Aorta (tissue), 5 donors: ENCODE measurements at regions of chr1 and their contacts with region 1.

Region 1: DNA sequence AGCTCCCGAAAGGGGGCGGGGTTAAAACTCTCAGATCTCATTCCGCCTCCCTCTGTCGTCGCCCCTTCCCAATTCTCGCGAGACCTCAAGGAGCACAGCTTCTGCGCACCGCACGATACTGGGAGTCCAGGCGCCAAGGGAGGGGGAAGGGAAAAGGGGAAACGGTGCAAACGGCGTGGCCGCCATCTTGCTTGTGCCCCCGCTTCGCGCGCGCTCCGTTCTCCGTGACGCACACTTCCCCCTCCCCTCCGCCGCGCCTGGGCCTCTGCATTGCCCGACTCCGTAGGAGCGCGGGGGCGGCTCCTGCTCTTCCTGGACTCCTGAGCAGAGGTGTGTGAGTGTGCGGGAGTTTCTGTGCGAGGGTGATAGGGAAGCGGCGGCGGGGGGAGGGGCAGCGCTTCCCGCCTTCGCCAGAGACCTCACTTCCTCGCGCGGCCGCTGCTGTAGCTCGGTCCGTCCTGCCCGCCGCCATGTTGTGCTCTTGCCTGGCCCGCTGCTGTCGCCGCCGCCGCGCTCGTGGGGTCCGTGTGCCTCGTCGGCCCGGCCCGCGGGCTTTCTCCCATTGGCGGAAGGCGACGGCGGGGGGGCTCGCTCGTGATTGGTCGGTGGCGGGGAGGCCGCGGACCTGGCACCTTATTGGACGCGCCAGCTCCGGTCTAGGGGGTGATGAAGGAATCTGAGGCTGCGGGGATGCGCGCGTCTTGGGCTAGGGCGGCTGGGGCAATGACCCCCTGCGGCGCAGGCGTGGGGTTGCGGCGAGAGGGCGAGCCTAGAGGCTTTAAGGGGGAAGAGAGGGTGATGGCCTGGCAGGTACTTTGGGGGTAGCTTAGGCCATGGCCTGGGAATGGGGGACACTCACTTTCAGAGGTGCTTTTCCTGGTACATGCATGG is at the start of gene NFYC:
- DNase-seq: peak; percentile 99
- ATAC-seq: peak; percentile 98
- H3K4me3 ChIP-seq: peak within 1 kb of the TSS; percentile 58 to 77
- H3K27ac ChIP-seq: peak within 1 kb of the TSS; percentile 89 to 95
- H3K4me1 ChIP-seq: peaks cover 0 to 5% of the 10 kb centered on the region in 2 donors
- H3K27me3 ChIP-seq: no peaks in the 10 kb centered on the region
- total RNA-seq, gene NFYC: 39.1 to 56.4 TPM

Region 2: DNA sequence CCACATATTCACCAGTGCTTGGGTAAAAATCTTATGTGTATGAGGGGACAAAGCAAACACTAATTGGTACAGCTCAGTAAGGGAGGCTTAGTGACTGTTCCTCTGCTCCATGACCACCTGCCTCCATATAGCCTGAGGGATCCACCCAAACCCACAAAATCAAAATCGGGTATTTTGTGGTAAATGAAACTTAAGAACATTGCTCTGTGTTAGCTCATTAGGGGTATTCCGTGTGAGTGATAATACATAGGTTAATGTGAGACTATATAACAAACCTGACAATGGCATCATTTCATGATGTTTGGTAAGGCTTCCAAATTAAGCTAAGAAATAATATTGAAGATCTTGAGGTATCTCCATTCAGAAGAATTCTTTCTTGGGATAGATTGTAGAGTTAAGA is 400.5 kb before region 1 on chr1:
- intact Hi-C with region 1: no loop called
- DNase-seq: no peak
- ATAC-seq: no peak
- H3K4me3 ChIP-seq: no peak overlapping the region
- H3K27ac ChIP-seq: no peak overlapping the region
- H3K4me1 ChIP-seq: peaks cover 0 to 1% of the 10 kb centered on the region in 2 donors
- H3K27me3 ChIP-seq: no peaks in the 10 kb centered on the region

Region 3: DNA sequence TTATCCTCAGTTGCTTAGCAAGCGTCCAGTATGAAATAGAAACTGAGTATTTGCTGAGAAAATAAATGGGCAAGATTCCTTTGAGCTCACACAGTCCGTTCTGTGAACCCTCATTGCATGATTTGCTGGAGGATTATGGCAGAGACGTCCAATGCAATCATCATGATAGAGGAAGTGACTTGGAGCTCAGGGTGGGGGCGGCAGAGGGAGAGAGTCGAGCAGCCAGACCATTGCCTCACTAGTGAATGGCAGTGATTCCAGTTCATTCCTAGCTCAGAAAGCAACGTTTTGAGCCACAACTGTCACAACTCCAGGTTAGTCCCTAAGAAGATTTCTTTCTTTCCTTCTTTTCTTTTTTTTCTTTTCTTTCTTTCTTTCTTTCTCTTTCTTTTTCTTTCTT is 347.2 kb before region 1 on chr1:
- intact Hi-C with region 1: no loop called
- DNase-seq: peak in 1 of 2 donors; percentile 82
- ATAC-seq: peak; percentile 57
- H3K4me3 ChIP-seq: no peak overlapping the region
- H3K27ac ChIP-seq: no peak overlapping the region
- H3K4me1 ChIP-seq: no peaks in the 10 kb centered on the region
- H3K27me3 ChIP-seq: no peaks in the 10 kb centered on the region

Region 4: DNA sequence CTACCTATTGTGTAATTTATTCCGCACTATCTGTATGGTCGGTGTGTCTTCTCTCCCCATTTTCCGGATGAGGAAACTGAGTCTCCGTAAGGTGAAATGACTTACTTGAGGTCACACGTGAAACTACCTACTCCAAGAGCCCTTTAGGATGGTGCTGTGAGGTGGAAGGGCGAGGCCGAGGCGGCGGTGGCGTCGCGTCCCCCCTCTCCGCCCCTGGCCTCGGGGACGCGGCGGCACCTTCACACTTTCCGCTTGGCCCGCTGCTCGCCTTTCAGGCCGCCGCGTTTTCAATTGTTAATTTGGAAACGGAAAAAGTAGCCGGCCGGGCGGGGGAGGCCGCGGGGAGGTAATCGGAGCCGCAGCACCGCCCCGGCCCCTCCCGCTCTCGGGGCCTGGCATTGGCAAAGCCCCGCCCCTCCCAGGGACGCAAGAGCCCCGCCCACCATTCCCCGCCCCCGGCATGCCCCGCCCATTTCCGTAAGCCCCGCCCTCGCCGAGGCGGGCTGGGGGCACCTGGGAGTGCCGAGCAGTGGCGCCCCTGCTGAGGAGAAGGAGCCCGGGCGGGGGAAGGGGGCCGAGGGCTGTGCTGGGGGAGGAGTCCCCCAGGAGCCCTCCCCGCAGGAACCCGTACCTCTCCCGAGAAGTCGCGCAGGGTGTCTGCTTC is 110.4 kb after region 1 on chr1:
- intact Hi-C with region 1: loop called in 1 of 2 experiments (anchors 10 kb)
- DNase-seq: peak; percentile 87 to 95
- ATAC-seq: peak; percentile 88
- H3K4me3 ChIP-seq: no peak overlapping the region
- H3K27ac ChIP-seq: peak overlapping the region in 1 of 2 donors; percentile 49
- H3K4me1 ChIP-seq: peaks cover 2 to 4% of the 10 kb centered on the region in 2 donors
- H3K27me3 ChIP-seq: no peaks in the 10 kb centered on the region